ACHN (cell line): ENCODE measurements at regions of chr1 and their contacts with region 1.

Region 1: DNA sequence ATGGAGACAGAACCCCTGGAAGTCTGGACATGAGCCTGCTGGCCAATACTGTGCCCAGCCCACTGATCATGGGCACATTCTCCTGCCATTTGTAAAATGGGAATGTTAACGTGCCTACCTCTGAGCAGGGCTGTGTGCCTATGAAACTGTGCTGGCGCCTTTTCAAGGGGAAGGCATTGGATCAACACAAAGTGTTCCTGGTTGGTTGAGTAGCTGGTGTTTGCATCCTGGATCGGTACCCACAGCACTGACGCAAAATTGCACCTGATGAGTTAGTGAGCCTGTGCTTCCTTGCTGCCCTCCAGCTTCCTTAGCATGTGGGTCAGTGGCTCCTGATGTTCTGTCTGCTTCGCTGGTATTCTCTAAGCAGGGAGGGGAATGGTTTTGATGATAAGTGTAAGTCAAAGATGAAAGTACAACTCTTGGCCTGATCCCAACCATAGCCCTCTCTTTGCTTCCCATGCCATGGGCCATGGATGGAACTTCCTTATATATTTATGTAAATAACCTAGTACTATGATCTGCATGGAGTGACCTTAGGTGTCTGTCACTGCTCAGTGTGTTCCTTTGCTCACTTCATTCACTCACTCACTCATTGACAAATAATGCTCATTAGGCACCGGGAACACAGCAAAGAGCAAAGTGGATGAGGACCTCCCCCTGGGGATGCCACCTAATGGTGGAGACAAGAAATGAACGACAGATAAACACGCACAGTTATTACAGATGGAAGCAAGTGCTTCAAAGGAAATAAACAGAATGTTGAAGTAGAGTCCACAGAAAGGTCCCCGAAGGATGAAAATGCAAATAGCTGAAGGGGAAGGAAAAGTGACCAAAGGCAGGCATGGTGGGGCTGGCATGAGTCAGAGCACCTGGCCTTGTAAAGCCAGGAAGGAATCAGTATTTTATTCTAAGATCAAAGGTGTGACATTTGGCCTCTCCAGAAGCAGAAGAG is 22.8 kb downstream of the MAB21L3 start:
- DNase-seq: no peak

Region 2: GRCh38 chr1:116485071-116485735 is 351.2 kb after region 1 on chr1:
- in situ Hi-C with region 1: loop called (anchors 25 kb)
- DNase-seq: peak; percentile 67